Gastrocnemius medialis (tissue), 4 donors: ENCODE measurements at regions of chr14 and their contacts with region 1.

Region 1: GRCh38 chr14:95549656-95550585 is 15.1 kb downstream of the GLRX5 start:
- DNase-seq: no peak
- ATAC-seq: no peak
- H3K4me3 ChIP-seq: no peak overlapping the region
- H3K27ac ChIP-seq: no peak overlapping the region
- H3K4me1 ChIP-seq: peaks cover 22 to 24% of the 10 kb centered on the region in 2 donors
- H3K27me3 ChIP-seq: no peaks in the 10 kb centered on the region
- CTCF ChIP-seq: no peak
- POLR2A ChIP-seq: no peak

Region 2: GRCh38 chr14:95255487-95255886 is 294.4 kb before region 1 on chr14:
- in situ Hi-C with region 1: no loop called
- intact Hi-C with region 1: no loop called
- DNase-seq: no peak
- ATAC-seq: no peak
- H3K4me3 ChIP-seq: no peak overlapping the region
- H3K27ac ChIP-seq: no peak overlapping the region
- H3K4me1 ChIP-seq: peaks cover 0 to 8% of the 10 kb centered on the region in 2 donors
- H3K27me3 ChIP-seq: no peaks in the 10 kb centered on the region
- CTCF ChIP-seq: no peak
- POLR2A ChIP-seq: no peak

Region 3: GRCh38 chr14:95774265-95775160 is 224.6 kb after region 1 on chr14:
- in situ Hi-C with region 1: loop called in 1 of 4 experiments (anchors 10 kb)
- intact Hi-C with region 1: no loop called
- DNase-seq: no peak
- ATAC-seq: no peak
- H3K4me3 ChIP-seq: no peak overlapping the region
- H3K27ac ChIP-seq: no peak overlapping the region
- H3K4me1 ChIP-seq: no peaks in the 10 kb centered on the region
- H3K27me3 ChIP-seq: peaks cover 0 to 2% (median 0%) of the 10 kb centered on the region in 3 donors
- CTCF ChIP-seq: peak; percentile 30 to 72 (median 50)
- POLR2A ChIP-seq: no peak